Right ventricle myocardium inferior (tissue), 1 donor: ENCODE measurements at regions of chr5 and their contacts with region 1.

Region 1: DNA sequence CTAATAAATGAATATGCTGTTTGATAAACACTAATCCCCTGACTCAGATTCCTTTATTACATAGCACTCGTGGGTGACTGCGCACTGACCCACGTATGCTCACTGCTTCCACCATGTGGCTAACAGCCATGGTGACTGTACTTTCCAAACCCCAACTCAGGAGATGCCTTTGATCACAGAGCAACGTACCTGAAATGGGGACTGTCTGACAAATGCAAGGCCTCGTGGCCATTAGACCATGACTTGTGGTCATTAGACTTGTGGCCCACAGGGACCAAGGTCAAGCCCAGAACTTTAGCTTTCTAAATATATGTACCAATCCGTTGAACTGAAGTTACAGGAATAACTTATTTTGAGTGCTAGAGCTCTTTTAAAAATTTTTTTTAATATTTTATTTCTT is 46.6 kb downstream of the CYFIP2 start:
- DNase-seq: no peak
- ATAC-seq: no peak

Region 2: DNA sequence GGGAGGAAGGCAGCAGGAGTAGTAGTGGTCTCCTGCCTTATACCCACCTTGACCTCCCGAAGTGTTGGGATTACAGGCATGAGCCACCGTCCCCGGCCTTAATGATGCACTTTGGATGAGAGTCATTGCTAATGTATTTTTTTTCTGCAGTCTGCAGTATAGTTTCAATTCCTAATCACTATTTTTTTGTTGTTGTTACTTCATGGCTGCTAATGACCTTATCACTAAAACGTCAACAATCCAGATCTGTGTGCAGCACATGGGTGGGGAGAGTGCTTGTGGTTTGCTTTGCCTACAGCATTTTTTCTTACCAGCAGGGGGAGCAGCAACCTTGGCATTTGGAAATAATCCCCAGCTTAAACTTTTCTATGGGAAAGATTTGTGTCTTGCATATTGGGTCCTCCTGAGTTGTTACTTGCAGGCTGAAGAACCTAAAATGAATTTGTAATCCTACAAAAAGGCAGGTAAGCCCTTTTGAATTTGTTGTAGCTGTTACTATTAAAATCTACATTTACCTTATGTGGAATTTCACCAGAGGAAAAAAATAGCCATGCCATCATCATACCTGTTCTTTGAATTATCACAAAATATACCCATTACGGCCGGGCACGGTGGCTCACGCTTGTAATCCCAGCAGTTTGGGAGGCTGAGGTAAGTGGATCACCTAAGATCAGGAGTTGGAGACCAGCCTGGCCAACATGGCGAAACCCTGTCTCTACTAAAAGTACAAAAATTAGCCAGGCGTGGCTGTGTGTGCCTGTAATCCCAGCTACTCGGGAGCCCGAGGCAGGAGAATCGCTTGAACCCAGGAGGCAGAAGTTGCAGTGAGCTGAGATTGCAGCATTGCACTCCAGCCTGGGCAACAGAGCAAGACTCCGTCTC is 163.5 kb before region 1 on chr5:
- intact Hi-C with region 1: loop called (anchors 5 kb)
- DNase-seq: no peak
- ATAC-seq: peak; percentile 73

Region 3: GRCh38 chr5:157253547-157253946 is 58.9 kb before region 1 on chr5:
- intact Hi-C with region 1: loop called (anchors 1 kb)
- DNase-seq: no peak
- ATAC-seq: peak; percentile 84

Region 4: DNA sequence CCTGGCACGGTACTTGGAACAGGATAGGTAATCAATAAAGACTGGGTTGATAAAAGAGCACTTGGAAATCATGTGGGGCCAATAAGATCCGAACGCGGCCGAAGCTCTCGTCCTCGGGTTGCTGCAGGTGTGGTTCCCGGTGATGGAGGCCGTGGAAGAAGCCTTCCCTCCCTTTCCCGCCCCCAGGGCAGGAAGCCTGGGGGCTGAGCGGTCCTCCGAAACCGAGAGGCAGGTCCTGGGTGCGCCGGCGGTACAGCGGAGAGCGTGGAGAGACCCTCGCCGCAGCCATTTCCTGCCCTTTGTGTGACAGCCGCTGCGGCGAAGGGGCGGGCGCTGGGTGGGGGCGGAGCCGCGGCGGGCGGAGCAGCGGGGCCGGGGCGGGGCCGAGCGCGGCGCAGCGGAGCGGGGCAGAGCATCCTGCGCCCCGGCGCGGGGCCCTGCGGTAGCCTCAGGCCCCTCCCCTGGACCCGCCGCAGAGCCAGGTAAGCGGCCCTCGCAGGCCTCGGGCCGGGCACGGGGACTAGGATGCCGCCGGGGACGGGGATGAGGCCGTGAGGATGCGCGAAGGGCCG is 46.7 kb before region 1 on chr5 and contains the start of gene CYFIP2:
- intact Hi-C with region 1: loop called (anchors 5 kb)
- DNase-seq: peak; percentile 82
- ATAC-seq: peak; percentile 86
- total RNA-seq, gene CYFIP2: 29.6 TPM